ENCODE measurements at regions of chr6 and their contacts with region 1.

Region 1: DNA sequence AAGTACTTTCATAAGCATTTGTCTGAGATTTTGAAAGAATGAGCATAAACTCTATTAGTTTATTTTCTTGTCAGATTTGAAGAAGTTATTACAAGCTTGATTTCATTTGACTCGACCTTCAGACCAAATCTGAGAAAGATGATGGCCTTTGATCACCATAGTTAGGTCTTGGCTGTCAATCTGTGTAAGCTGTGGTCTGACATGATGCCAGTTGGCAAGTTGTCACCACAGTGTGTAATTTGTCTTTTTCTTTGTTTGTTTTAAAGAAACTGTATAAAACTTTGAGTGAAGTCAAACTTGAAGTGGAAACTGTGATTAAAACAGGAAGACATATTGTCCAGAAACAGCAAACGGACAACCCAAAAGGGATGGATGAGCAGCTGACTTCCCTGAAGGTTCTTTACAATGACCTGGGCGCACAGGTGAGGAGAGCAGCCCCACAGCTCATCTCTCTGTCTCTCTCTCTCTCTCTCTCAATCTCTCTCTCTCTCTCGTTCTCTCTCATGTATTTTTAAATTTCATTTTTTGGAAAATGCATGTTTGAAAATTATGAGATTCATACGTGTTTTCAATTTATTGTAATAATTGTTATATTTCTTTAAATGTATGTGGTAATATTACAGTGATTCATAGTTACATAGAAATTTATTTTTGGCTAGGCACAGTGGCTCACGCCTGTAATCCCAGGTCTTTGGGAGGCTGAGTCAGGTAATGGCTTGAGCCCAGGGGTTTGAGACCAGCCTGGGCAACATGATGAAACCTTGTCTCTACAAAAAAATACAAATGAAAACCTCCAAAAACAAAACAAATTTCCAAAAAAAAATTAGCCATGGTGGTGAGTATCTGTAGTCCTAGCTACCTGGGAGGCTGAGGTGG is 208.1 kb downstream of the UTRN start:
- H3K4me3 ChIP-seq: no peak overlapping the region
- H3K27ac ChIP-seq: no peak overlapping the region
- H3K4me1 ChIP-seq: no peaks in the 10 kb centered on the region
- CTCF ChIP-seq: no peak

Region 2: GRCh38 chr6:144482142-144482541 is 11.1 kb before region 1 on chr6:
- CTCF ChIA-PET with region 1: interaction called, 16 read pairs
- POLR2A ChIA-PET with region 1: no interaction called
- H3K4me3 ChIP-seq: no peak overlapping the region
- H3K27ac ChIP-seq: no peak overlapping the region
- H3K4me1 ChIP-seq: no peaks in the 10 kb centered on the region
- CTCF ChIP-seq: no peak